AG04450 (cell line): ENCODE measurements at regions of chr1 and their contacts with region 1.

Region 1: DNA sequence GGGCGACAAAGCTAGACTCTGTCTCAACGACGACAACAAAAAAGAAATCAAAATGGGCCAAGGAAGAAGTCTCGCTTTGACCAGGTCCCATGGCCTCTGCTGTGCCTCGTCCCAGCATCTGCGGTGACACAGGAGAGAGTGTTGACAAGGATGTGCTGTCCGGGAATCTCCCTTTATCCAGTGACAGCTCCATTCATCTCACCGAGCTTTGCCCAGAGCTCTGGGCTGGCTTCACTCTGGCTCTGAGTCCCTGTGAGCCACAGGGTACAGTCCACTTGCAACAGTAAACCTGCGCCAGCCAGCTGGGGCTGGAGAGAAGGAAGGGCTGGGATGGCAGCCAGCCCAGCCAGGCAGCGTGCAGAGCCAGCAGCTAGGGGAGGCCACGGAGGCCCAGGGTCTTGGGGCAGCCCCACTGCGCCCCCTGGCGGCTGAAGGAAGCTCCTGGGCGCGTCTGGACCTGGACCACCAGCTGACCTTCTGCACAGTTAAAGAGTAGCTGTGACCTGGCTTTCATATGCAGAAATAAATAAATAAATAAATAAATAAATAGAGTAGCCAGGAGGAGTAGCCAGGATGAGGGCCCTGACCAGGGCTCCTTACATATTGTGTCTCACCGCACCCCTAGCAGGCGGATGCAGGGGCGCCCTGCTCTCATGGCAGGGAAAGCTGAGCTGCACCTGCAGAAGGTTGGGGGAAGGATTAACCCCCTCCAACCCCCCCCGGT is 29.7 kb downstream of the ENO1 start:
- DNase-seq: peak; percentile 89
- H3K4me3 ChIP-seq: no peak overlapping the region
- H3K27ac ChIP-seq: no peak overlapping the region
- H3K27me3 ChIP-seq: peaks cover 11% of the 10 kb centered on the region
- CTCF ChIP-seq: peak; percentile 96

Region 2: DNA sequence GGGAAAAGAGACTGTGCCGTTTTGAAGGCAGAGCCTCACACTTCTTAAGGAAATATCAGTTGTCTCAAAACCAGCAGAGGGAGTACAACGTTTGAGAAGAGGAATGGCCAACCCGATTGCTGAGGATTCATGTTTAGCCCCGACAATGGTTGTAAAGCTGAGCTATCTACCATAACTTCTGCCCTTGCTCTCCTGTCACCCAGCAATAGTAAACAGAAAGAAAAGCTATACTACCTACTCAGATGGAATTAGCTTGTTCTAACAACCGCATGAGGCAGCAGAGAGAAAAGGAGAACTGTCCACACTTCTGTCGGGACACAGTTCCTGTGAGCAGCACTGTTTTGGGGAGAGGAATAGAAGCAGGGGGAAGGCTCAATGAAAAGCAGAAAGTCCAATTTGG is 439.7 kb before region 1 on chr1:
- CTCF ChIA-PET with region 1: interaction called, 10 read pairs
- POLR2A ChIA-PET with region 1: no interaction called
- DNase-seq: no peak
- H3K4me3 ChIP-seq: no peak overlapping the region
- H3K27ac ChIP-seq: peak overlapping the region; percentile 76
- H3K27me3 ChIP-seq: no peaks in the 10 kb centered on the region
- CTCF ChIP-seq: peak; percentile 67

Region 3: GRCh38 chr1:8671306-8671917 is 177.4 kb before region 1 on chr1:
- CTCF ChIA-PET with region 1: interaction called, 13 read pairs
- POLR2A ChIA-PET with region 1: no interaction called
- DNase-seq: peak; percentile 56
- H3K4me3 ChIP-seq: no peak overlapping the region
- H3K27ac ChIP-seq: no peak overlapping the region
- H3K27me3 ChIP-seq: no peaks in the 10 kb centered on the region
- CTCF ChIP-seq: peak; percentile 86

Region 4: DNA sequence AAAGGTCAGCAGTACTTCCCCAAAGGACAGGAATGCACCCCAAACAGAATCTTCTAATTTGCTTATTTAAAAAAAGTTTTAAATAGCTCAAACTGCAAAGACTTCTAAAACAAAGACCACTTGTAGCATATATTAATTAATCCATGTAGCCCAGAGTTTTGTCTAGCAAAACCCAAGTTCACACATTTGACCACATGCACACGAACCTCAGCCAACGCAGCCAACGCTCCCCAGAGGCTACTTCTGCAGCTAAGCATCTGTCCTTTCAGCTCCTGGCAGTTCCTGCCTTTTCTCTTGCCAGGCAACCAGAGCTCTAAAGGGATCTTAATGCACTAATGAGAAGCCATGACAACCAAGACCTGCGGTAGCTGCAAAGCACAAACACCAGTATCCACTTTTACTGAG is 121.0 kb before region 1 on chr1:
- CTCF ChIA-PET with region 1: interaction called, 51 read pairs
- POLR2A ChIA-PET with region 1: no interaction called
- DNase-seq: no peak
- H3K4me3 ChIP-seq: no peak overlapping the region
- H3K27ac ChIP-seq: no peak overlapping the region
- H3K27me3 ChIP-seq: no peaks in the 10 kb centered on the region
- CTCF ChIP-seq: no peak

Region 5: GRCh38 chr1:8809342-8809736 is 39.5 kb before region 1 on chr1:
- CTCF ChIA-PET with region 1: interaction called, 11 read pairs
- POLR2A ChIA-PET with region 1: interaction called, 4 read pairs
- DNase-seq: no peak
- H3K4me3 ChIP-seq: no peak overlapping the region
- H3K27ac ChIP-seq: no peak overlapping the region
- H3K27me3 ChIP-seq: no peaks in the 10 kb centered on the region
- CTCF ChIP-seq: no peak

Region 6: DNA sequence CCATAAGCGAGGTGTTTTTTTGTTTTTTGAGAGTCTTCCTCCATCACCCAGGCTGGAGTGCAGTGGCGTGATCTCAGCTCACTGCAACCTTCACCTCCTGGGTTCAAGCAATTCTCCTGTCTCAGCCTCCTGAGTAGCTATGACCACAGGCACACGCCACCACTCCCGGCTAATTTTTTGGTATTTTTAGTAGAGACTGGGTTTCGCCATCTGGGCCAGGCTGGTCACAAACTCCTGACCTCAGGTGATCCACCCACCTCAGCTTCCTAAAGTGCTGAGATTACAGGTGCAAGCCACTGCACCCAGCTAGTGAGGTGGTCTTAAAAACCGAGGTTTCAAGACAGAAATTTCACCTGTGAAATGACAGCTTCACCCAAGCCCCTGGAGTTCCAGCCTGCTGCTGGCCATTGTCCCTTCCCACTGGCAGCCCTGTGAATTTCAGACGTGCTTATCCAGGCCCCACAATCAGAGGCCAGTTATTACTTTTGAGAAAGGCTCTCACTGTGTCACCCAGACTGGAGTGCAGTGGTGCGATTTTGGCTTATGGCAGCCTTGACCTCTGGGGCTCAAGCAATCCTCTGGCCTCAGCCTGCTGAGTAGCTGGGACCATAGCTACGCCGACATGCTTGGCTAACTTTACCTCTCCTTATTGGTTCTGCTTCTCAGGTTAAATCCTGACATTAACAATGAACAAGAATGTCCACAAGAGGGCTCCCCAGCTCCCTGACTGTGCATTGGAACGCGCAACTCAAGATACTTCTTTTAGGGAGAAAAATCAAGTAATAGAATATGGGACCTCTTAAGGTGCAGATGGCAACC is 10.3 kb after region 1 on chr1:
- CTCF ChIA-PET with region 1: interaction called, 82 read pairs
- POLR2A ChIA-PET with region 1: interaction called, 9 read pairs
- DNase-seq: no peak
- H3K4me3 ChIP-seq: no peak overlapping the region
- H3K27ac ChIP-seq: no peak overlapping the region
- H3K27me3 ChIP-seq: no peaks in the 10 kb centered on the region
- CTCF ChIP-seq: peak; percentile 71

Region 7: DNA sequence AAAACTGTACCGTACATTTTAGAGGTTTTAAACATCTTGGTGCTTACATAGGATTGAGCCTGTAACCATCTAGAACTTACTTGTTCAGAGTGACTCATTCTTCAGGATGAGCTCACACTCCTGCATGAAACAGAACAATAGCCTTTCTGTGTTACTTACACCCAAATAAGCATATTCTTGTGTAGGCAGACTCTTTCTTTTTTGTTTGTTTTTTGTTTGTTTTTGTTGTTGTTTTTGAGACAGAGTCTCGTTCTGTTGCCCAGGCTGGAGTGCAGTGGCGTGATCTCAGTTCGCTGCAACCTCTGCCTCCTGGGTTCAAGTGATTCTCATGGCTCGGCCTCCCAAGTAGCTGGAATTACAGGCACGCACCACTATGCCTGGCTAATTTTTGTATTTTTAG is 93.1 kb after region 1 on chr1:
- CTCF ChIA-PET with region 1: no interaction called
- POLR2A ChIA-PET with region 1: no interaction called
- DNase-seq: peak; percentile 61
- H3K4me3 ChIP-seq: no peak overlapping the region
- H3K27ac ChIP-seq: no peak overlapping the region
- H3K27me3 ChIP-seq: no peaks in the 10 kb centered on the region
- CTCF ChIP-seq: no peak